ENCODE measurements at regions of chr3 and their contacts with region 1.

Region 1: GRCh38 chr3:180802837-180803236 is 109.6 kb upstream of the FXR1 start:
- DNase-seq: no peak
- H3K4me3 ChIP-seq: no peak overlapping the region
- H3K27ac ChIP-seq: no peak overlapping the region
- H3K4me1 ChIP-seq: no peaks in the 10 kb centered on the region
- H3K27me3 ChIP-seq: no peaks in the 10 kb centered on the region
- CTCF ChIP-seq: peak; percentile 18 to 62 (median 44)
- POLR2A ChIP-seq: no peak

Region 2: DNA sequence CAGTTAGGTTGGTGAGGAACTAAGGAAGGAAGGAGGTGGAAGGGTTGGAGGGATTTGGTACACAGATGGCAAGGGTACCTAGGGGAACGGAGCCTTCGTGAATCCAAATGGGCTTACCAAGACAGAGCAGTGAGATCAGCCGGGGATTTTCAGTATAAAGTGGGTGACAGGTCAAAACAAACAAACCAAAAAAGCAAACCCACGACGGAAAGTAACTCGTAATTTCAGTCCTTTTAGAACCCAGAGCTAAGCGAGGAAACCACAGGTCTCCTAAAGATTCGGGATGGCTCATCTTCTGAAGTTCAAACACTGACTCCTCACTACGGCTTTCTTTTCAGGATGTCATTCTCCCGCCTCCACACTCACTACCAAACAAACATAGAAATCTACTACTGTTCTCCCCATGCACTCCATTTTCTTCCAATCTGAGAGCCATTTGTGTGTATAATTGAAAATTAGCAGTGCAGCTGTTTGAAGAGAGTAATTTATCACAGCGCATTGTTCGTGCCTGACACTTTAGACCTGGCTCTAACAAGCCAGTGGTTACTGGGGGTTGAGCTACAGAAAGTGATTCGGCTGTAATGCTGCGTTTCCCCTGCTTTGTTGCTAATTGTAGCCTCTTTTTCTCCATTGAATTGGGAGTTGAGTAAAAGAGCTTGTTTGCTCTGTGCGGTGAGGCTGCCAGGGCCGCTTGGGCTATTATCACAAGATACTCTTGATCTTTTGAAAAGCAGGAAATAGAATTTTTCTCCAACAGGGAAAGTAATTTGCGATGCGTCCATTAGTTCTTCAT is 58.8 kb before region 1 on chr3:
- intact Hi-C with region 1: no loop called
- DNase-seq: no peak
- H3K4me3 ChIP-seq: no peak overlapping the region
- H3K27ac ChIP-seq: no peak overlapping the region
- H3K4me1 ChIP-seq: no peaks in the 10 kb centered on the region
- H3K27me3 ChIP-seq: no peaks in the 10 kb centered on the region
- CTCF ChIP-seq: no peak
- POLR2A ChIP-seq: no peak

Region 3: GRCh38 chr3:180909369-180910127 is 106.7 kb after region 1 on chr3:
- intact Hi-C with region 1: no loop called
- DNase-seq: no peak
- H3K4me3 ChIP-seq: no peak overlapping the region
- H3K27ac ChIP-seq: no peak overlapping the region
- H3K4me1 ChIP-seq: peaks cover 13 to 17% of the 10 kb centered on the region in 2 donors
- H3K27me3 ChIP-seq: no peaks in the 10 kb centered on the region
- CTCF ChIP-seq: no peak
- POLR2A ChIP-seq: no peak

Region 4: DNA sequence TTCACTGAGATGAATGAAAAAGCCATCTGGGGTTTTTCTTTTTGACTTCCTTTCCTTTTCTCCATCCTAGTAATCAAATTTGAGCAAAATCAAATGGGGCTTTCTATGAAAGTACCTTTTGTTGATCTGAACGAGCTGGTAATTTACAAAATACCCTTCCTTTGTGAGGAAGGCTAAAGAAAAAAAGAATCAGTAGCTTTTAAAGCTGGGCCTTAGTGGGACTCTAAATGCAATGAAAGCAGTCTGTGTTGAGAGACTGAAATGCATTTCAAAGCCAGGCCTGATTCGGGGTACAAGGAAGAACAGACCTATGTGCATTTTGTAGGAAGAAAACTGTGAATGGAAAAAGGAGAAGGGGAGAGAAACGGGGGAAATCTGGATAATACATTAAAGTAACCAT is 372.0 kb after region 1 on chr3:
- intact Hi-C with region 1: loop called in 1 of 2 experiments (anchors 5 kb)
- DNase-seq: no peak
- H3K4me3 ChIP-seq: no peak overlapping the region
- H3K27ac ChIP-seq: no peak overlapping the region
- H3K4me1 ChIP-seq: no peaks in the 10 kb centered on the region
- H3K27me3 ChIP-seq: no peaks in the 10 kb centered on the region
- CTCF ChIP-seq: no peak
- POLR2A ChIP-seq: no peak

Region 5: DNA sequence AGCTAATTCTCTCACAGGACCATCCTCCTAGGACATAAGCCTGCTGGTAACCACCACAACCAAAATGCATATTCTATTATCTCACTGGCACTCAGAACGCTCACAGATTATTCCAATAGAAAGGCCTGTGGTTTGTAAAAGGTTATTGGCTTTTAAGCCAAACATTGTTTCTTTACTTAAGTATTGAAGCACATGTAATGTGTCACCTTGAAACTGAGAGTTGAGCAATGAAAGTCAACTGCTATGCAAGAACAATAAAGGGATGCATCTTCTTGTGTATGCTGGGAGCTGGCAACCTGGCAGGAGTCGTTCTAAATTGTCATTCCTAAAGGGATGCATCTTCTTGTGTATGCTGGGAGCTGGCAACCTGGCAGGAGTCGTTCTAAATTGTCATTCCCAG is 485.3 kb after region 1 on chr3:
- intact Hi-C with region 1: loop called in 1 of 2 experiments (anchors 10 kb)
- DNase-seq: no peak
- H3K4me3 ChIP-seq: no peak overlapping the region
- H3K27ac ChIP-seq: no peak overlapping the region
- H3K4me1 ChIP-seq: no peaks in the 10 kb centered on the region
- H3K27me3 ChIP-seq: no peaks in the 10 kb centered on the region
- CTCF ChIP-seq: no peak
- POLR2A ChIP-seq: no peak